ENCODE measurements at regions of chr19 and their contacts with region 1.

Region 1: DNA sequence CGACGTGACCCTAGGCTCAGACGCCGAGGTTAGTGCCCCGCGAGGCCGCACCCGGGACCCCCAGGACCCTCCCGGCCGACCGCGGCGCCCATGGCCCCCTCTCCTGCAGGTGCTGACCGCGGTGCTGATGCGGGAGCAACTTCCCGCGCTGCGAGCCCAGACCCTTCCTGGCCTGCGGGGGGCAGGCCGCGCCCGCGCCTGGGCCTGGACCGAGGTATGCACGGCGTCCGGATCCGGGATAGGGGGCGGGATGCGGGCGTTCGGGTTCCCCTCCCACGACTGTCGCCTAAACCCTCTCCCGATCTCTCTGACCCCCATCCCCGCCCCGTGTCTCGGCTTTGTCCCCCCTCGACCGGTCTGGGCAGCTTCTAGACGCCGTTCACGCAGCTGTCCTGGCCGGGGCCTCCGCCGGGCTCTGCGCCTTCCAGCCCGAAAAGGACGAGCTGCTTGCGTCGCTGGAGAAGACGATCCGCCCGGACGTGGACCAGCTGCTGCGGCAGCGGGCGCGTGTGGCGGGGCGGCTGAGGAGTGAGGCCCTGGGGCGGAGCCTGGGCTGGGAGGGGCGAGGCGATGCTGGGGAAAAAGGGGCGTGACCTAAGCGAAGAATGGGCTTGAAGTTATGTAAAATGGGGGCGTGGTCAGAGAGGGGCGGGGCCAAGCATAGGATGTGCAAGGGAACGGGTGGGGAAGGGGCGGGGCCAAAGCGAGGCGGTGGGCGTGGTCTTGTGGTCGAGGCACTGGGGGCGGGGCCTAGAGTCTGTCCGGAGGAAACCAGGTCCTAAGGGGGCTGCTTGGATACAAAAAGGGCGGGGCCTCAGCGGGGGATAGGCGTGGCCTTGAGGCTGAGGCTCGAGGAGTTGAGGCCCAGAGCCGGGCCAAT is 16.0 kb upstream of the COLGALT1 start:
- DNase-seq: peak; percentile 96
- ATAC-seq: peak; percentile 86
- H3K4me3 Mint-ChIP-seq: peak overlapping the region; percentile 84
- H3K27ac Mint-ChIP-seq: peak overlapping the region; percentile 90
- H3K4me1 Mint-ChIP-seq: peaks cover 56% of the 10 kb centered on the region
- H3K27me3 Mint-ChIP-seq: no peaks in the 10 kb centered on the region
- CTCF ChIP-seq: no peak

Region 2: GRCh38 chr19:17473041-17473440 is 66.4 kb before region 1 on chr19:
- CTCF ChIA-PET with region 1: no interaction called
- POLR2A ChIA-PET with region 1: no interaction called
- intact Hi-C with region 1: no loop called
- DNase-seq: no peak
- ATAC-seq: no peak
- H3K4me3 Mint-ChIP-seq: no peak overlapping the region
- H3K27ac Mint-ChIP-seq: no peak overlapping the region
- H3K4me1 Mint-ChIP-seq: peaks cover 20% of the 10 kb centered on the region
- H3K27me3 Mint-ChIP-seq: no peaks in the 10 kb centered on the region
- CTCF ChIP-seq: no peak

Region 3: DNA sequence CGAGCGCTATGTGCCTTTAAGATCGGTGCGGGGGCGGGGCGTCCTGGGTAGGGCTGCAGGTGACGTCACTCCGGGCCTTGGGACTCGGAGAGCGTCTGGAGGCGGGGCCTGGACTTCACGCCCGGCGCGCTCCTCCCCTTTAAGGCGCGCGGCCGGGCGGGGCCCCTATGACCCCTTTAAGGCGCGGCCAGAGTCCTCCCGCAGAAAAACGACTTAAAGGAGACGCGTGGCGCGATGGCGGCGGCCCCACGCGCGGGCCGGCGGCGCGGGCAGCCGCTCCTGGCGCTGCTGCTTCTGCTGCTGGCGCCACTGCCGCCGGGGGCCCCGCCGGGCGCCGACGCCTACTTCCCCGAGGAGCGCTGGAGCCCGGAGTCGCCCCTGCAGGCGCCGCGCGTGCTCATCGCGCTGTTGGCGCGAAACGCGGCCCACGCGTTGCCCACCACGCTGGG is 16.0 kb after region 1 on chr19 and contains the start of gene COLGALT1:
- CTCF ChIA-PET with region 1: interaction called, 3 read pairs
- POLR2A ChIA-PET with region 1: interaction called, 27 read pairs
- intact Hi-C with region 1: loop called (anchors 1 kb)
- DNase-seq: peak; percentile 94
- ATAC-seq: peak; percentile 93
- H3K4me3 Mint-ChIP-seq: peak within 1 kb of the TSS; percentile 84
- H3K27ac Mint-ChIP-seq: peak within 1 kb of the TSS; percentile 75
- H3K4me1 Mint-ChIP-seq: peaks cover 23% of the 10 kb centered on the region
- H3K27me3 Mint-ChIP-seq: no peaks in the 10 kb centered on the region
- CTCF ChIP-seq: no peak
- total RNA-seq, gene COLGALT1: 69.2 and 80.3 TPM in 2 replicates

Region 4: DNA sequence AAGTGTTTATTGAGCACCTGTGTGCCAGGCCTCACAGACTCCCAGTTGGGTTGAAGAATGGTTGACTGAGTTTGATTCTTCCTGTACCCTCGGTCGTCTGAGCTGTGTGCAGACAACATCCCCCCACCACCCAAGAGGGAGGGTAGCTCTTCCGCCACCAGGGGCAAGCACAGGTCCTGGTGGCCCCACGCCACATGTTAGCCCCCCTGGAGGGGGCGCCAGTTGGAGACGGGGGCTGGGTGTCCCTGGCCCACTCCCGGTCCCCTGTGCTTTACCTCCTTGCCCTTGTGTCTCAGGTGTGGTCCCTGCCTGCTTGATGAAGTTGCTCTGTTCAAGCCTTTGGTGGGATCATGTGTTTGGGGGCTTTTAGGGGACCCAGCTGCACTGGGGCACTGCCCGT is 43.1 kb after region 1 on chr19:
- CTCF ChIA-PET with region 1: no interaction called
- POLR2A ChIA-PET with region 1: no interaction called
- intact Hi-C with region 1: no loop called
- DNase-seq: no peak
- ATAC-seq: no peak
- H3K4me3 Mint-ChIP-seq: no peak overlapping the region
- H3K27ac Mint-ChIP-seq: no peak overlapping the region
- H3K4me1 Mint-ChIP-seq: peaks cover 9% of the 10 kb centered on the region
- H3K27me3 Mint-ChIP-seq: no peaks in the 10 kb centered on the region
- CTCF ChIP-seq: no peak